Activated CD4-positive, alpha-beta T cell treated with anti-CD3 and anti-CD28 coated beads, Interleukin-2, amount 10 ng/mL, durations not matched to agents 24 days and 14 days (primary cell): ENCODE measurements at regions of chr12 and their contacts with region 1.

Region 1: DNA sequence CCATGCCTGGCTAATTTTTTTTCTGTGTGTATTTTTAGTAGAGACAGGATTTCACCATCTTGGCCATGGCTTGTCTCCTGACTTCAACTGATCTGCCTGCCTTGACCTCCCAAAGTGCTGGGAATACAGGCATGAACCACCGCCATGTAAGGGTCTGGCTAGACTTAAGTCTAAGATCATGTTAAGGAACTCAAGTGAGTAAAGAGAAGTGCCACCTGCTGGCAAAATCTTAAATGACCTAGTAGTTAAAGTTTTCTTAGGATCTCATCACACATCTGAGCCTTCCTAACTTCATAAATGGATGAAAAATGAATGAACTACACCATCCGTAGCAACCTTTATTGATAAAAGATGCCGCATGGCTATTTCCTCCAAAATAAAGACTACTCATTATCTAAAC is 1.7 kb upstream of the C12orf56 start:
- DNase-seq: peak; percentile 75
- H3K4me3 Mint-ChIP-seq: no peak overlapping the region
- H3K27ac Mint-ChIP-seq: no peak overlapping the region
- H3K4me1 Mint-ChIP-seq: peaks cover 8% of the 10 kb centered on the region
- H3K27me3 Mint-ChIP-seq: peaks cover 13% of the 10 kb centered on the region

Region 2: DNA sequence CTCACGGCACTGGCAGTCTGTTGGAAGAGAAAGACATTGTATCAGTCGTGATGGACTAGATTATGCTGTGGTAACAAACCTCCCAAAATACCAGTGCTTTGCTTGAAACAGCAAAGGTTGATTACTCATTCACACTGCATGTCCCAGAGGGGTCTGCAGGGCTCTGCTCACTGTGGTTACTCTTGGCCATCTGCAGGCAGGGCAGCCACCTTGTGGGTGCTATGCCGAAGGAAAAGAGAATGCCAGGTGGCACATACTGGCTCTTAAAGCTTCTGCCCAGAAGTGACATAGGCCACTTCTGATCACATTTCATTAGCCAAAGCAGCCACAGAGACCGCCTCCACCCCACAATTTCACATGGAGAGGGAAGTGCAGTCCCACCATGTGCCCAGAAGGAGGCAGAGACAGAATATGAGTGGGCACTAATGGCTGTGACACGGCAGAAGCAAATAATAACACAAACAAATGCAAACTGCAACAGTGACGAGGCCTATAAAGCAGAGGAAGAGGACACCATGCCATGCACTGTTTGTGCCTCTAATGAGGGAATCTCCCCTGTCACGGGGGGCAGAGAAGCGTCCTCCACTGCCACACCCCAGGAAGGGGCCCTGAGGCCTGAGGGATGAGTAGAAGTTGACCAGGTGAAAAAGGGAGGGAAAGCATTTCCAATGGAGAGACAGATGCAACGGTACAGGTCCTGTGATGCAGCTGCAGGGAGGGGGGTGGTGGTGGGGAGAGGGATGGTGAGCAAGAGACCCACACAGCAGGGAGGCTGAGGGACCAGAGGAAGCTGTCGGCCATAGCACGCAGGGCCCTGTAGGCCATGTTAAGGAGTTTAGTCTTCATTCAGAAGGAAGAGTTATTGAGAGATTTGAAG is 118.5 kb before region 1 on chr12:
- intact Hi-C with region 1: loop called (anchors 1 kb)
- DNase-seq: peak; percentile 69
- H3K4me3 Mint-ChIP-seq: no peak overlapping the region
- H3K27ac Mint-ChIP-seq: no peak overlapping the region
- H3K4me1 Mint-ChIP-seq: no peaks in the 10 kb centered on the region
- H3K27me3 Mint-ChIP-seq: peaks cover 4% of the 10 kb centered on the region

Region 3: DNA sequence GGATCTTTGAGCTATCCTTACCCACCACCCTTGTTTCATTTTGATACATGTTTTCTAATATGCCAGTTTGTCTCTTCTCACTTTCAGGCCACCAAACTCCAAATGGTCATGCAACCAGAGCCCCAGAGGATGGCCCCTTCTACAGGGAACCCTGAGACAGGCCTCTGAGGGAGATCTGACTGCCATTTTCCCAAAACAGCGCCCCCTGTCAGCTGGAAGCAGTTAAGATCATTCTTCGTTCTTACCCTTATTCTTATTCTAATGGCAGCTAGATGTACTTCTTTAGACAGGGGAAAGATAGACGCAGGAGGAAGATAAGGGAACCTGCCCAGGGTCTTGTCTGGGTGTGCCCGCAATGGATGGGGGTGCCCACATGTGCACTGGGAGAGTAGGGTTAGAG is 40.0 kb before region 1 on chr12:
- intact Hi-C with region 1: no loop called
- DNase-seq: no peak
- H3K4me3 Mint-ChIP-seq: no peak overlapping the region
- H3K27ac Mint-ChIP-seq: no peak overlapping the region
- H3K4me1 Mint-ChIP-seq: no peaks in the 10 kb centered on the region
- H3K27me3 Mint-ChIP-seq: peaks cover 4% of the 10 kb centered on the region